Activated CD4-positive, alpha-beta memory T cell treated with anti-CD3 and anti-CD28 coated beads, Interleukin-2, amount 10 ng/mL, durations not matched to agents 7 days and 5 days (primary cell): ENCODE measurements at regions of chr22 and their contacts with region 1.

Region 1: DNA sequence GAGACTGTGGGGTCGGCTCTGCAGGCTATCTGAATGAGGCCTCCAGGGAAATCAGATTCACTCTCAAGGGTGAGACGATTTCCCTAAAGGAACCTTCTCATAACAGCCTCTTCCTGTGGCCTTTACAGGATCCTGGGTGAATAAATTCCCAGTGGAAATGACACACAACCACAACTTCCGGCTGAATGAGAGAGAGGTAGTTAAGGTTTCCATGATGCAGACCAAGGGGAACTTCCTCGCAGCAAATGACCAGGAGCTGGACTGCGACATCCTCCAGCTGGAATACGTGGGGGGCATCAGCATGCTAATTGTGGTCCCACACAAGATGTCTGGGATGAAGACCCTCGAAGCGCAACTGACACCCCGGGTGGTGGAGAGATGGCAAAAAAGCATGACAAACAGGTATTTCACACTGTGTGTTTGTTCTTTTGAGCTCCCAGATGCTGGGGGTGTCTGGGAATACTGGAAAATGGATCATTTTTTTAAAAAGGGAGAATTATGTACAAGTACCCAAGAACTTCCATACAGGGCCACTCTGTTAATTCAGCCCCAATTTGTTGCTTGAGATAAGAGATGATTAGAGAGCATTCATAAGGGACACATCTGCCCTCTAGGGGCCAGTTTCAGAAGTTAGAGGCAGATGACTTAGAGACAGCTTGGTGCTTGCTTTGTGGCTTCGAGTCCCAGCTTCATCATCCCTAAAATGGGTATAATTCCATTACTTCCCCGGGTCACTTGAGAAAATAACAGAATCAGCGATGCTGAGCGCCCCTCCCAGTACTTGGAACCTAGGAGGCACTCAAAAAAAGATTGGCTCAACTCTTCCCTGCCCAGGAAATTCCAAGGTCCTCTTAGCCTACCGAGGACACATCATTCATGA is 10.2 kb downstream of the SERPIND1 start:
- DNase-seq: peak; percentile 47
- H3K4me3 Mint-ChIP-seq: no peak overlapping the region
- H3K27ac Mint-ChIP-seq: no peak overlapping the region
- H3K4me1 Mint-ChIP-seq: peaks cover 11% of the 10 kb centered on the region
- H3K27me3 Mint-ChIP-seq: no peaks in the 10 kb centered on the region

Region 2: GRCh38 chr22:20756846-20757245 is 27.2 kb before region 1 on chr22:
- CTCF ChIA-PET with region 1: interaction called, 10 read pairs
- POLR2A ChIA-PET with region 1: no interaction called
- DNase-seq: no peak
- H3K4me3 Mint-ChIP-seq: no peak overlapping the region
- H3K27ac Mint-ChIP-seq: no peak overlapping the region
- H3K4me1 Mint-ChIP-seq: no peaks in the 10 kb centered on the region
- H3K27me3 Mint-ChIP-seq: no peaks in the 10 kb centered on the region

Region 3: GRCh38 chr22:20852076-20852475 is 68.0 kb after region 1 on chr22:
- CTCF ChIA-PET with region 1: no interaction called
- POLR2A ChIA-PET with region 1: no interaction called
- DNase-seq: no peak
- H3K4me3 Mint-ChIP-seq: no peak overlapping the region
- H3K27ac Mint-ChIP-seq: no peak overlapping the region
- H3K4me1 Mint-ChIP-seq: peaks cover 15% of the 10 kb centered on the region
- H3K27me3 Mint-ChIP-seq: no peaks in the 10 kb centered on the region